BJ (cell line): ENCODE measurements at regions of chr10 and their contacts with region 1.

Region 1: GRCh38 chr10:109978481-109978880 is 29.3 kb upstream of the ADD3 start:
- DNase-seq: no peak
- H3K4me3 ChIP-seq: no peak overlapping the region
- H3K27me3 ChIP-seq: no peaks in the 10 kb centered on the region
- CTCF ChIP-seq: peak; percentile 77

Region 2: DNA sequence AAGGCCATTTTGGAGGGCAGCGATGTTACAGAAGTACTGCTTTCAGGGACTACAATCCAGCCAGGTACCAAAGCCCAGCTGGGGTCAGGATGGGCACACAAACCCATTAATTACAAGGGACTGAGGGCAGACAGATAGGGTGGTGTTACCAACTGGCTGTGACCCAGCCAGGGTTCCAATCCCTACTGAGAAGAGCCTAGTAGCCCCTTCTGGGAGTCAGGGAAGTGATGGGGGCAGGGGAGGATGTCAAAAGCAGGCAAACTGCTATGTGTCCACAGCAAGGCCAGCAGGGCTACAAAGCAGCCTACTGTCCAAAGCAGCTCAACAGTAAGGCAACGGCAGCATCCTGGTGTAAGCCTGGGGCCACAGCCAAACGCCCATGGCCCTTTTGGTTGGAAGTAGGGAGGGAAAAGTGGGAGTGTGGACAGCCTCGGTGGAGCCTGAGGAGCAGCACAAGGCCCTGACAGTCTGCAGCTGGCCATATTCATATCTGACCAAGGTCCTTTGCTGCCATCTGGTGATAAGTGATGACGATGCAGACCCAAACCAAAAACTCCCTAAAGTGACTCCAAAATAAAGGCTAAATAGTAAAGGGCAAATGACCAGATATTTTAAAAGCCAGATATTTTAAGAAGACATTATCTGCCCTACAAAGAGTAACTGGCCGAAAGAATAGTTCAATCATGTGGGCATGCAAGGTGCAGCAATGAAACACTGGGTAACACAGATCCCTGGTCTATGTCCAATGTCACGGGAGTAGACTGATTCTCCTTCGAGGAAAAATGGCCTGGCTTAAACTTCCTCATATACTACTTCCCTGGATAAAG is 112.1 kb before region 1 on chr10:
- CTCF ChIA-PET with region 1: no interaction called
- POLR2A ChIA-PET with region 1: no interaction called
- DNase-seq: no peak
- H3K4me3 ChIP-seq: no peak overlapping the region
- H3K27me3 ChIP-seq: no peaks in the 10 kb centered on the region
- CTCF ChIP-seq: peak; percentile 24; the same call in 1 of the 2 replicates

Region 3: DNA sequence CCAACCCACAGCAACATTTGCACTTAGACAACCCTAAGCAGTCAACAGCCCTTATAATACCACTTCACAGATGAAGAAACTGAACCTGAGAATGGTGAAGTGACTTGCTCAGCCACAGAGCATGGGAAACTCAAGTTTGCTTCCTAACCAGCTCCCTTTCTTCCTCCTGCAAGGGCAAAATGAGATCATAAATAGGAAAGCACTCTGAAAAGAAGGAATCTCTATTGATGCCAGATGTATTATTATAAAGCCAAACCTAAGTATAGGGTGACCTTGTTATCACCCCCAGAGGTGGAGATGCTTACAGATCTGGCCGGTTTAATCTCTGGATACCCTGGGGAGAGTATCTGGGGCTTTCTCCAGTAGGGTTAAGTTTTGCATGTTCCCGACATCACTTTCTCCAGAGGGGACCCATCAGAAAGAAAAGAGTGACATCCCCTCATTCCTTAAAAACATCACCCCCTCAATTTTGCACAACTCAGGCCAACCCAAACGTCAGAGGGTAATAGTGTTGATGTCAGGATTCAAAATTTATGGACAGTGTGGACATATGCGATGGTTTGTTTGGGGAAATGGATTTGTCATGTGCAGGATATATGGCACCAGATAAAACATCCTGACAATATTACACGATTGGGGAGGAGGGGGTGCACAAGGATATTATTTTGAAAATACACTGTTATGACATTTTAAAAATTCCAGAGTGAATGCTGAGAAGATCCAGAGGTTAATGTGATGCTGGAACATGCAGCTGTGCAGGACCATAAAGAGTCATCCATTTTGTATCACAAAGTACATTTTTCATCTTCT is 31.2 kb before region 1 on chr10:
- CTCF ChIA-PET with region 1: no interaction called
- POLR2A ChIA-PET with region 1: no interaction called
- DNase-seq: no peak
- H3K4me3 ChIP-seq: no peak overlapping the region
- H3K27me3 ChIP-seq: peaks cover 1% of the 10 kb centered on the region; the same call in 1 of the 2 replicates
- CTCF ChIP-seq: no peak

Region 4: DNA sequence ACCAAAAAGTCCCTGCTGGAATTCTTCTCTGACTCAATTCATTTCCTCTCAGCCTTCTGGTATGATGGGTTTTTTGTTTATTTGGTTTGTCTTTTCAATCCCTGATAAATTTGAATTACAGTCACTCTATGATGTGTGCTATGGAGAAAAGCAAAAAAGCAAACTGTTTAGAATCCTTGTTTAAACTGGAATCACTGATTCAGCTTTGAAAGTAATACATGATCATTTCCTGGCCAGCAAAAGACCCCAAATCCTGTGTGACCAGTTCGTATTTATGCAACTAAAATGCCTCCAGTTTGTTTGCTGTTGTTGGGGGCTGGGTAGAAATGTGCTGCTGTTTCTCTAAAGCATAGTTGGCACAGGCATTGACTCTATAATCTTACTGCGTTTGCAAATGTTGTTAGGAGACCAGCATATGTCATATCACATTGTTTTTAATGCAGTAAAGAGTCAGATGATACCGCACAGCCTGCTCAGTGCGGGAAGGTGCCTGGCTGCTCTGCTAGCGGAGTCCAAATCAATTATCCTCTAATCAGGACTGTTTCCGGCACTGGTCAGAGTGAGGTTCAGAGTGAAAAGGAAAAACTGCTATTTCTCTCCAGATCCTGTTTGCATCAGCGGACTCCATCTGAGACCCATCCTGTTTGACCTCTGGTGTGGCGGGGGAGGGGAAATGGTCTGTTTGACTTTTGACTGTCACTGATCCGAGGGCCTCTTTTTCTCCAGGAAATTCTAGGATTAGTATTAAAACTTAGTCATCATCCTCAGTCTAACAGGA is 11.3 kb before region 1 on chr10:
- CTCF ChIA-PET with region 1: interaction called, 30 read pairs
- POLR2A ChIA-PET with region 1: no interaction called
- DNase-seq: no peak
- H3K4me3 ChIP-seq: no peak overlapping the region
- H3K27me3 ChIP-seq: no peaks in the 10 kb centered on the region
- CTCF ChIP-seq: no peak

Region 5: DNA sequence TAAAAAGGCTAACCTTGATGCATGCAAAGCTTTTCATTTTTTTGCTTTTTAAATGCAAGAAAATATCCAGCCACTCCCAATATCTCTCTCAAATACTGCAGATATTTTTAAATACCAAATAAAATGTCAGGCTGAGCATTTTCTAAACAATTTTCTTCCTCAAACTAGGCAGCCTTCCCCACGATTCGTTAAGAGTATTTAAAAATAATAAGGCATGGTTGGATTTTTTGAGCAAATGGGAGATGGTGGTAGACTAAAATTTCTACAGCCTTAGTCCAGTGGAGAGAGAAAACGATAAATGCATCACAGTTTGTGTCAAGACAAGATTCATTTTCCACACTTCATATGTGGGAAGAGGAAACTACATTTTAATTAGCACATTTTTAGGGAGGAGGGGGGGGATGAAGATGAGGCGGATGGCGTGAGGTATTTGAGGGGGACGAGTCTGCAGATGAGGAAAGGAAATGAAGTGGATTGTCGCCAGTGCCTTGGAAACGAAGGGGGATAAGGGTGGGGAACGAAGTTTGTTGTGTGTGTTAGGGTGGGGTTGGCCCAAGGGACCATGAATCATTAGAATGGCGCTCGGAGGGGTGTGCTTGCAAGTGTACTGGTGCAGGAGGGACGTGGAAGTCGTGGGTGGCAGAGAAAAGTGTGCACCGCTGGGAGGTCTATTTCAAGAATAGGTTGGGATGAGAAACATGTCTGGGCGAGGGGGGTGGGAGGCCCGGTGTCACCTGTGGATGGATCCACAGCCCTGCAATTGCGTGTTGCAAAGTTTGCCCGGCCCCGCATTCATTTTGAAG is 28.1 kb after region 1 on chr10:
- CTCF ChIA-PET with region 1: interaction called, 12 read pairs
- POLR2A ChIA-PET with region 1: no interaction called
- DNase-seq: no peak
- H3K4me3 ChIP-seq: peak overlapping the region; percentile 97
- H3K27me3 ChIP-seq: no peaks in the 10 kb centered on the region
- CTCF ChIP-seq: no peak